Aorta (tissue), 5 donors: ENCODE measurements at regions of chr1 and their contacts with region 1.

Region 1: DNA sequence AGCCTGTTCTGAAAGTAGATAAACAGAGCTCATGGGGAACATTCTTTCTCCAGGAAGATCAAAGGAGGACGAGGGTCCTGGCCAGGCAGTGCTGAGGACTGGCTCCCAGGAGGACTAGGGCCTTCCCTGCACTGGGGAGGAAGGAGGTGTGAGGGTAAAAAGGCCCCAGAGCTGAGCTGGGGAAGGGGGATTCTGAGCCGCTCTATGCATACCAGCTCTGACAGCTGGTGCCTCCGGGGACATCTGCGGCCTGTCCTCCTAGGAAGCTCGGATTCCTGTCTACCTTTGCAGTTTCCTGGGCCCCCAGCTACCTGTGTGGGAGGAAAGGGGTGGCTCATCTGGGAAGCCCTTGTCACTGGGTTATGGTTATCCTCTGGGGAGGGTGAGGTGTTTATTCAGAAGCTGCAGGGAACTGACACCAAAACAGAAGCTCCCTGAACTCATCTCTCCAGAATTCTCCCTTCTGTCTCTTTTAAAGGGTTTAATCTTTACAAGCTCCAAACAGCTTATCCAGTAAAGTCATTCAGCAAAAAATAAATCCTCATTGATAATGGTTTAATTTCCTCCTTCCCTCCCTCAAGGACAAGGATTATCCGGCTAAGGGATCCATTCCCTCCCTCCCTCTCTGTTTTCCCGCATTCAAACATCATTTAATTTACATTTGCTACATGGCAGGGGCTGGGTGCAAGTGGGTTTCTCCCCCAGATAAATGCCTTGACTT is 31.0 kb downstream of the NENF start:
- DNase-seq: peak in 1 of 2 donors; percentile 27
- ATAC-seq: no peak
- H3K4me3 ChIP-seq: no peak overlapping the region
- H3K27ac ChIP-seq: no peak overlapping the region
- H3K4me1 ChIP-seq: no peaks in the 10 kb centered on the region
- H3K27me3 ChIP-seq: no peaks in the 10 kb centered on the region

Region 2: GRCh38 chr1:212421165-212421564 is 42.6 kb before region 1 on chr1:
- intact Hi-C with region 1: no loop called
- DNase-seq: no peak
- ATAC-seq: no peak
- H3K4me3 ChIP-seq: no peak overlapping the region
- H3K27ac ChIP-seq: no peak overlapping the region
- H3K4me1 ChIP-seq: no peaks in the 10 kb centered on the region
- H3K27me3 ChIP-seq: no peaks in the 10 kb centered on the region

Region 3: GRCh38 chr1:212595787-212596714 is 132.3 kb after region 1 on chr1:
- intact Hi-C with region 1: no loop called
- DNase-seq: no peak
- ATAC-seq: peak; percentile 54
- H3K4me3 ChIP-seq: no peak overlapping the region
- H3K27ac ChIP-seq: peak overlapping the region in 1 of 2 donors; percentile 48
- H3K4me1 ChIP-seq: no peaks in the 10 kb centered on the region
- H3K27me3 ChIP-seq: no peaks in the 10 kb centered on the region

Region 4: DNA sequence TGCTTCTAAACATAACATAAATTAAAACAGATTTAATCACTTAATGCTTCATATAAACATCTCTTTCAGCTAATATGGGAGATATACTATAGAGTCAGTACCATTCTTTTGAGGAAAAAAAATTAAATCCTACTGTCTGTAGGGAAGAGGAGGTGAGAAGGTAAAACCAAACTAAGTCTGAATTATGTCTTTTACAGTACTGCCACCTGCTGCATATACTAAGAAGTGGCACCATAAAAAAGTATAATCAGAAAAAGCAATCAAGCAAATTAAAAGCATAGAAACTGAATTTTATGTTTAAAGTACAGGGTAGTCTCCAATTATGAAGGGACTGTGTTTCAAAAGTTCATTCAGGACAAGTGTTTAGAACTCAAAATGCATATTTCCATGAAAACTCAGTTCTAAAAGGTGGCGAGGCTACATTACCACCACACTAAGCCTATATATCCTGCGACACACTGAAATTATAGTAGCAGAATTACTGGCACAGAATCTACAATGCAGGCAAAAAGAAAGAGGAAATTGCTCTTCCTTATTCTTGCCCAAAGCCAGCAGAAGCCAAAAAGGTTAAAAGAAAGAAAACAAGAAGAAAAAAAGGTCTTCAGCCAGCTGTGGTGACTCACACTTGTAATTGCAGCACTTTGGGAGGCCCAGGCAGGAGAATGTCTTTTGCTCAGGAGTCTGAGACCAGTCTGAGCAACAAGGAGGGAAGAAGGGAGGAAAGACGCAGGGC is 318.9 kb after region 1 on chr1:
- intact Hi-C with region 1: loop called (anchors 5 to 10 kb)
- DNase-seq: no peak
- ATAC-seq: no peak
- H3K4me3 ChIP-seq: no peak overlapping the region
- H3K27ac ChIP-seq: no peak overlapping the region
- H3K4me1 ChIP-seq: no peaks in the 10 kb centered on the region
- H3K27me3 ChIP-seq: no peaks in the 10 kb centered on the region